CD4-positive, alpha-beta memory T cell (primary cell): ENCODE measurements at regions of chr1 and their contacts with region 1.

Region 1: DNA sequence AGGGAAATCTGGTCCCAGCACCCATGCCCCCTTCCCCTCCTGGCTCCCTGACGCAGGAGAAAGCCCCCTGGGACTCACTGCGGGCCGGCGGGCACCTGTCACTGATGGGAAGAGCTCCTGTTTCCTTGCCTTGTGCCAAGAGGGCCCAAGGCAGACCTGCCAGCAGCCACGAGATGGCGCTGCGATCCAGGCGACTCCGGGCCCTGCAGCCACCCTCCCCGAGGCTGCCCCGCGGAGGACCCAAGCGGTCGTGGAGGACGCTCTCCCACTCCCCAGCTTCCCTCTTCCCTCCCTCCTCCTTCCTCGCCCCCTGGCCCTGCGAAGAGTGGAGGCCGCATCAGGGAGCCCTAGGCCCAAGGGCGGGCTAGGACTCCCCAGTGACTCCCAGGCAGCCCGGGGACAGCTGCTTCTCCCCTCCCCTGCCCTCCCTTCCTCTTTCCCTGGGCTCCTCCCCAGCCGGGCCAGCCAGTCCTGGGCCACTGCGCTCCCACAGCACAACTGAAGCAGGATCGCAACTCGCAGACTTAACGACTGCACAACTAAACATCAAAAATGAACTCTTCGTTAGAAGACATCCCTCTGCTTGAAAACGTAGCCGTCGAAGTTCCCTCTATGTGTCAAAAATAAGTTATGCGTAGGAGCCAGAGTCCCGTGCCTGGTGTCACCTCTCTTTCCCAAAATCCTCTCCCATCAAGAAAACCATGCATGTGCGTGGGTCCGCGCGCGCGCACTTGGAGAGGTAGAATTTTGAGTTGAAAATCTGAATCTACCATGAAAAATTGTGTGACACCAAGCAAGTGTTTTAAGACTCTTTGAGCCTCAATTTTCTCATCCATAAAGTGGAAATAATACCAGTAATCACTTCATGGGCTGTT is 34.2 kb downstream of the BATF3 start:
- DNase-seq: peak; percentile 65 to 80 (median 71)
- H3K4me3 ChIP-seq: peak overlapping the region in 1 of 2 donors; percentile 40
- H3K4me3 Mint-ChIP-seq: peak overlapping the region; percentile 43 to 86 (median 82)
- H3K27ac ChIP-seq: no peak overlapping the region
- H3K27ac Mint-ChIP-seq: peak overlapping the region in 1 of 7 donors; percentile 19
- H3K4me1 ChIP-seq: peaks cover 5% of the 10 kb centered on the region
- H3K4me1 Mint-ChIP-seq: peaks cover 1 to 7% (median 6%) of the 10 kb centered on the region in 4 donors
- H3K27me3 ChIP-seq: no peaks in the 10 kb centered on the region
- H3K27me3 Mint-ChIP-seq: peaks cover 1 to 2% of the 10 kb centered on the region in 2 donors

Region 2: GRCh38 chr1:212749821-212750535 is 84.5 kb after region 1 on chr1:
- CTCF ChIA-PET with region 1: interaction called, 17 read pairs
- POLR2A ChIA-PET with region 1: no interaction called
- intact Hi-C with region 1: no loop called
- DNase-seq: peak; percentile 12 to 39 (median 26)
- H3K4me3 ChIP-seq: peak overlapping the region in 1 of 2 donors; percentile 12
- H3K4me3 Mint-ChIP-seq: peak overlapping the region in 6 of 8 donors; percentile 2 to 69 (median 28)
- H3K27ac ChIP-seq: peak overlapping the region; percentile 33
- H3K27ac Mint-ChIP-seq: peak overlapping the region; percentile 12 to 93 (median 84)
- H3K4me1 ChIP-seq: peaks cover 47% of the 10 kb centered on the region
- H3K4me1 Mint-ChIP-seq: peaks cover 37 to 46% (median 42%) of the 10 kb centered on the region in 4 donors
- H3K27me3 ChIP-seq: no peaks in the 10 kb centered on the region
- H3K27me3 Mint-ChIP-seq: no peaks in the 10 kb centered on the region

Region 3: GRCh38 chr1:212760126-212760823 is 94.8 kb after region 1 on chr1:
- CTCF ChIA-PET with region 1: interaction called, 15 read pairs
- POLR2A ChIA-PET with region 1: no interaction called
- intact Hi-C with region 1: loop called (anchors 5 kb)
- DNase-seq: peak; percentile 14 to 46 (median 20)
- H3K4me3 ChIP-seq: no peak overlapping the region
- H3K4me3 Mint-ChIP-seq: no peak overlapping the region
- H3K27ac ChIP-seq: no peak overlapping the region
- H3K27ac Mint-ChIP-seq: no peak overlapping the region
- H3K4me1 ChIP-seq: no peaks in the 10 kb centered on the region
- H3K4me1 Mint-ChIP-seq: peaks cover 9 to 31% (median 24%) of the 10 kb centered on the region in 4 donors
- H3K27me3 ChIP-seq: no peaks in the 10 kb centered on the region
- H3K27me3 Mint-ChIP-seq: no peaks in the 10 kb centered on the region

Region 4: GRCh38 chr1:212777151-212777550 is 111.7 kb after region 1 on chr1:
- CTCF ChIA-PET with region 1: interaction called, 67 read pairs
- POLR2A ChIA-PET with region 1: no interaction called
- intact Hi-C with region 1: loop called (anchors 1 kb)
- DNase-seq: no peak
- H3K4me3 ChIP-seq: no peak overlapping the region
- H3K4me3 Mint-ChIP-seq: no peak overlapping the region
- H3K27ac ChIP-seq: no peak overlapping the region
- H3K27ac Mint-ChIP-seq: peak overlapping the region in 1 of 7 donors; percentile 27
- H3K4me1 ChIP-seq: no peaks in the 10 kb centered on the region
- H3K4me1 Mint-ChIP-seq: peaks cover 6 to 24% (median 13%) of the 10 kb centered on the region in 4 donors
- H3K27me3 ChIP-seq: no peaks in the 10 kb centered on the region
- H3K27me3 Mint-ChIP-seq: no peaks in the 10 kb centered on the region

Region 5: GRCh38 chr1:212782422-212783154 is 117.1 kb after region 1 on chr1:
- CTCF ChIA-PET with region 1: interaction called, 67 read pairs
- POLR2A ChIA-PET with region 1: no interaction called
- intact Hi-C with region 1: loop called (anchors 1 kb)
- DNase-seq: peak in 4 of 5 donors; percentile 29 to 38 (median 32)
- H3K4me3 ChIP-seq: no peak overlapping the region
- H3K4me3 Mint-ChIP-seq: peak overlapping the region in 1 of 8 donors; percentile 10
- H3K27ac ChIP-seq: no peak overlapping the region
- H3K27ac Mint-ChIP-seq: peak overlapping the region in 3 of 7 donors; percentile 12 to 29 (median 17)
- H3K4me1 ChIP-seq: no peaks in the 10 kb centered on the region
- H3K4me1 Mint-ChIP-seq: peaks cover 2 to 8% (median 6%) of the 10 kb centered on the region in 4 donors
- H3K27me3 ChIP-seq: no peaks in the 10 kb centered on the region
- H3K27me3 Mint-ChIP-seq: no peaks in the 10 kb centered on the region

Region 6: DNA sequence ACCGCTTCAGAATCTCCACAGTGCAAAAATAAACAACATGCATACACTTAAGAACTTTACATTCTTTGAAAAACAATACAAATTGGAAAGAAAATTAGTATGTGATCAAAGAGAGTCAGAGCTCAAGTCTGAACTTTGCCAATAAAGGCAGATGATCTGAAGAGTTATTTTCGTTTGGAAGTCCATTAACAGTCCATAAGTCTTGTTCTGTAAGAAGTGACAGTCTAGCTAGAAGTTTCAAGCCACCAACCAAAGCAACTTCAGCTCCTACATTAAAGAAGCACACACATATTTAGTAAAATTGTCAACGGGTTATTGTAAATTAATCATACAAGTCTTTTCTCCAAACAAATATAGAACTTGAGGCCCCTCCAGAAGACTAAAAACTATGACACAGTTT is 329.4 kb after region 1 on chr1:
- CTCF ChIA-PET with region 1: interaction called, 31 read pairs
- POLR2A ChIA-PET with region 1: no interaction called
- intact Hi-C with region 1: no loop called
- DNase-seq: no peak
- H3K4me3 ChIP-seq: no peak overlapping the region
- H3K4me3 Mint-ChIP-seq: no peak overlapping the region
- H3K27ac ChIP-seq: no peak overlapping the region
- H3K27ac Mint-ChIP-seq: no peak overlapping the region
- H3K4me1 ChIP-seq: no peaks in the 10 kb centered on the region
- H3K4me1 Mint-ChIP-seq: peaks cover 3 to 6% (median 5%) of the 10 kb centered on the region in 4 donors
- H3K27me3 ChIP-seq: no peaks in the 10 kb centered on the region
- H3K27me3 Mint-ChIP-seq: no peaks in the 10 kb centered on the region

Region 7: DNA sequence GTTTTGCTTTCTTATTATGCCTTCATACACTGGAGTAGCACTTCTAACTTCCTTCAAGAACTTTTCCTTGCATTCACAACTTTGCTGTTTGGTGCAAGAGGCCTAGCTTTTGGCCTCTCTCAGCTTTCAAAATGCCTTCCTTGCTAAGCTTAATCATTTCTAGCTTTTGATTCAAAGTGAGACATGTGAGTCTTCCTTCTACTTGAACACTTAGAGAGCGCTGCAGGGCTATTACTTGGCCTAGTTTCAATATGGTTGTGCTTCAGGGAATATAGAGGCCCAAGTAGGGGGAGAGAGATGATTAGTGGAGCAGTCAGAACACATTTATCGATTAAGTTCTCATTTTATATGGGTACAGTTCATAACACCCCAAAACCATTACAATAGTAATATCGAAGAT is 337.8 kb after region 1 on chr1:
- CTCF ChIA-PET with region 1: interaction called, 13 read pairs
- POLR2A ChIA-PET with region 1: no interaction called
- intact Hi-C with region 1: no loop called
- DNase-seq: no peak
- H3K4me3 ChIP-seq: no peak overlapping the region
- H3K4me3 Mint-ChIP-seq: no peak overlapping the region
- H3K27ac ChIP-seq: no peak overlapping the region
- H3K27ac Mint-ChIP-seq: peak overlapping the region in 3 of 7 donors; percentile 2 to 42 (median 8)
- H3K4me1 ChIP-seq: no peaks in the 10 kb centered on the region
- H3K4me1 Mint-ChIP-seq: peaks cover 0 to 7% (median 6%) of the 10 kb centered on the region in 4 donors
- H3K27me3 ChIP-seq: no peaks in the 10 kb centered on the region
- H3K27me3 Mint-ChIP-seq: no peaks in the 10 kb centered on the region

Region 8: DNA sequence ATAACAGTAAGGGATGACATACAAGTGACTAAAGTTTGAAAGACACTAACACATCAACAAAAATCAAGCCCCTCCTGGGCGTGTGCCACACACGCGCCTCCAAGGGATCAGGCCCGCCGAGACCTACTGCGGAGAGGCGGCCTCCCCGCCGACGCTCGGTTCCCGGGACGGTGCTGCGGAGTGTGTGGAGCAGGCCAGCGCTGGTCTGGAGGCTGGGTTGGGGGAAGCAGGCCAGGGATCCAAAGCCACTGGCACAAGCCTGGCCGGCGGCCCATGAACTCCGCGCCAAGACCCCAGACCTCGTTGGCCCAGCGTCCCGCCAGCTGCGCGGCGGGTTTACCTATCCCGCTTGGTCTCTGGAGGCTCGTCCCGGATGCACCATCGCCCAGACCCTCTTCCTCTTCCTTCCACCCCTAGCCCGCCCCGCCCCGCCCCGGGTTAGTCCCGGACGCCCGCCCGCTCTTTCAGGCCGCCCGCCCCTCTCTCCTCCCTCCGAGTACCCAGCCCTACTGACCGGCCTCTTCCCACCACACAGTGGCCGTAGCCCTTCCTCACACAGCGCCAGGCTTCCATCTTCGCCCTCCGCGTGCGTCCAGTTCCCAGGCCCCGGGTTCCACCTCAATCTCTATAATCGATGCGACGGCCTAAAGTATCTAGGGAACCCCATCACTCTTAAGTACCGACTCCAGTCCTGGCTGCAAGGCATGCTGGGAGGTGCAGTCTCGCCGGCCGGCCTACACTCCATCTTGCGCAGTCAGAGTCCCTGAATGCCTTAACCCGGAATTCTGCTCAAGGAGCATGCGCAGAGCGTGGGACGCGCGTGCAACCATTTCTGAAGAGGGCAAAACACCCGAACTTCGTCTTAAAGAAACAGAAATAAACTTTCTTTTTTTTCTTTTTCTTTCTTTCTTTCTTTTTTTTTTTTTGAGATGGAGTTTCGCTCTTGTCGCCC is 349.9 kb after region 1 on chr1 and contains the start of gene ANGEL2:
- CTCF ChIA-PET with region 1: no interaction called
- POLR2A ChIA-PET with region 1: no interaction called
- intact Hi-C with region 1: no loop called
- DNase-seq: peak; percentile 92 to 98 (median 96)
- H3K4me3 ChIP-seq: peak within 1 kb of the TSS; percentile 55 to 79
- H3K4me3 Mint-ChIP-seq: peak within 1 kb of the TSS; percentile 96 to 100 (median 100)
- H3K27ac ChIP-seq: peak within 1 kb of the TSS; percentile 85
- H3K27ac Mint-ChIP-seq: peak within 1 kb of the TSS; percentile 98 to 100 (median 100)
- H3K4me1 ChIP-seq: peaks cover 40% of the 10 kb centered on the region
- H3K4me1 Mint-ChIP-seq: peaks cover 27 to 44% (median 34%) of the 10 kb centered on the region in 4 donors
- H3K27me3 ChIP-seq: no peaks in the 10 kb centered on the region
- H3K27me3 Mint-ChIP-seq: no peaks in the 10 kb centered on the region
- total RNA-seq, gene ANGEL2: 79.8 to 81.4 TPM

Region 9: DNA sequence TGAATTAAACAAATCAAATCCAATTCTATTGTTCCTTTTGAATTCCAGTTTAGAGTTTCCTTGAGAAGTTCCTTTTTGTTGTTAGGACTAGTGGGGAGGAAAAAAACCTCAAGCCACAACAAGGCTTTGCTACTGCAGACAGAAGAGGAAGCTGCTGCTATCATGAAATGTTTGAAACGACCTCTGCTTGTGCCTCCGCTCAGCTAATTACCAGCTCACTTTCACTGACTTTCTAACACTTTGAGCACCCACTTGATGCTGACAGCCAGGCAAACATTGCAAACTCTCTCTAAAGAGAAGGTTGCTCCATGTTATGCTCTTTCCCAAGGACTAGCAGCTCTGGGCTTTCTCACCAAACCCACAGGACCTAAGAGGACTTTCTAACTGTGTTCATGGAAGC is 1118.4 kb after region 1 on chr1:
- CTCF ChIA-PET with region 1: no interaction called
- POLR2A ChIA-PET with region 1: no interaction called
- intact Hi-C with region 1: no loop called
- DNase-seq: peak in 4 of 5 donors; percentile 11 to 20 (median 16)
- H3K4me3 ChIP-seq: no peak overlapping the region
- H3K4me3 Mint-ChIP-seq: peak overlapping the region in 4 of 8 donors; percentile 21 to 75 (median 70)
- H3K27ac ChIP-seq: no peak overlapping the region
- H3K27ac Mint-ChIP-seq: peak overlapping the region in 1 of 7 donors; percentile 52
- H3K4me1 ChIP-seq: no peaks in the 10 kb centered on the region
- H3K4me1 Mint-ChIP-seq: peaks cover 0 to 13% (median 6%) of the 10 kb centered on the region in 4 donors
- H3K27me3 ChIP-seq: no peaks in the 10 kb centered on the region
- H3K27me3 Mint-ChIP-seq: peaks cover 0 to 2% of the 10 kb centered on the region in 2 donors